ENCODE measurements at regions of chr6 and their contacts with region 1.

Region 1: DNA sequence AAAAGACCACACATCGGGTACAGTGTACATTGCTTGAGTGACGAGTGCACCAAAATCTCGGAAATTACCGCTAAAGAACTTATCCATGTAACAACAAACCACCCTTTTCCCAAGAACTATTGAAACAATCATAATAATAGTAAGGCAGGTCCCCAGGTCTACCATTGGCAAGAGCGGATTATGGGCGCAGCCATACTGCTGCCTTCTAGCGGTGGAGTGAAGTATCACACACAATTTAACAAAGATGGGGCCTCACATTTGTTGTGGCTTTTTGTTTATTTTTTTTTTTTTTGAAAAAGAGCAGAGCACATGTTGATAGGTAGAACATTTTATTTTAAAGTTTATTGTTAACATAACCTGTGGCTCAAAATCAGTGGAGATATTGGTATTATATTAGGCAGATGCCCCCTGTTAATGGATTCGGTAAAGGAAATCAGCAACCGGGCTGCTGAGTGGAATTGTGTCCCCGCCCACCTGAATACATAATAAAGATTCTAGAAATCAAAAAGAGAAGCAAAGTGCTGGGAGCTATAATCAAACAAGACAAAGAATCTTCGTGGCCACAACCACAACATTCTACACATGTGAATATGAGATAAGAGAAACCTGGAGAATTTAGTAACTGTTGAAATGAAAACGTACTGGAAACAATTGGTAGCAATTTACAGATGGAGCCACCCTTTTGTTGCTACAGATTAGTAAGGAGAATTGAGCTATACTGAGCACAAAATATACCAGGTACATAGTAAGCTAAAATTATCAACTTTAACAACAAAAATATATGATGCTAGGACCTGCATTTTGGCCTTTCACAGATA is 94.2 kb upstream of the EXOC2 start:
- DNase-seq: no peak
- H3K4me3 ChIP-seq: no peak overlapping the region
- H3K27ac ChIP-seq: no peak overlapping the region
- H3K27me3 ChIP-seq: peaks cover 0 to 4% (median 0%) of the 10 kb centered on the region in 45 donors
- CTCF ChIP-seq: peak in 53 of 56 donors; percentile 16 to 60 (median 42)

Region 2: GRCh38 chr6:593139-593906 is 193.8 kb before region 1 on chr6:
- intact Hi-C with region 1: loop called in 1 of 2 experiments (anchors 10 kb)
- DNase-seq: peak in 4 of 10 donors; percentile 36 to 69 (median 48)
- H3K4me3 ChIP-seq: no peak overlapping the region
- H3K27ac ChIP-seq: no peak overlapping the region
- H3K27me3 ChIP-seq: no peaks in the 10 kb centered on the region
- CTCF ChIP-seq: peak; percentile 65 to 96 (median 83)

Measured in dorsolateral prefrontal cortex (tissue), 120 donors.